A549 (cell line): ENCODE measurements at regions of chr9 and their contacts with region 1.

Region 1: GRCh38 chr9:108272349-108272899 is 583.4 kb downstream of the ACTL7B start:
- DNase-seq: peak; percentile 61 to 71
- ATAC-seq: peak; percentile 79 to 95
- H3K4me3 ChIP-seq: no peak overlapping the region
- H3K27ac ChIP-seq: peak overlapping the region; percentile 48 to 77
- H3K4me1 ChIP-seq: peaks cover 25% of the 10 kb centered on the region
- CTCF ChIP-seq: peak; percentile 71
- EP300 ChIP-seq: no peak
- POLR2A ChIP-seq: no peak
- RAD21 ChIP-seq: peak; percentile 85 to 86

Region 2: GRCh38 chr9:107489687-107490605 is 782.5 kb before region 1 on chr9 and contains the start of gene KLF4:
- CTCF ChIA-PET with region 1: interaction called, 13 read pairs
- POLR2A ChIA-PET with region 1: no interaction called
- DNase-seq: peak; percentile 79 to 95
- ATAC-seq: peak; percentile 81
- H3K4me3 ChIP-seq: peak within 1 kb of the TSS; percentile 53
- H3K27ac ChIP-seq: peak within 1 kb of the TSS; percentile 90 to 91
- H3K4me1 ChIP-seq: peaks cover 25% of the 10 kb centered on the region
- CTCF ChIP-seq: no peak
- EP300 ChIP-seq: peak in 1 of 2 experiments; percentile 67; a peak in 1 of 5 replicates
- POLR2A ChIP-seq: peak; percentile 59
- RAD21 ChIP-seq: peak; percentile 9 to 56; a peak in 3 of 5 replicates
- polyA plus RNA-seq, gene KLF4: 8.3 and 10.1 TPM in 2 replicates

Region 3: DNA sequence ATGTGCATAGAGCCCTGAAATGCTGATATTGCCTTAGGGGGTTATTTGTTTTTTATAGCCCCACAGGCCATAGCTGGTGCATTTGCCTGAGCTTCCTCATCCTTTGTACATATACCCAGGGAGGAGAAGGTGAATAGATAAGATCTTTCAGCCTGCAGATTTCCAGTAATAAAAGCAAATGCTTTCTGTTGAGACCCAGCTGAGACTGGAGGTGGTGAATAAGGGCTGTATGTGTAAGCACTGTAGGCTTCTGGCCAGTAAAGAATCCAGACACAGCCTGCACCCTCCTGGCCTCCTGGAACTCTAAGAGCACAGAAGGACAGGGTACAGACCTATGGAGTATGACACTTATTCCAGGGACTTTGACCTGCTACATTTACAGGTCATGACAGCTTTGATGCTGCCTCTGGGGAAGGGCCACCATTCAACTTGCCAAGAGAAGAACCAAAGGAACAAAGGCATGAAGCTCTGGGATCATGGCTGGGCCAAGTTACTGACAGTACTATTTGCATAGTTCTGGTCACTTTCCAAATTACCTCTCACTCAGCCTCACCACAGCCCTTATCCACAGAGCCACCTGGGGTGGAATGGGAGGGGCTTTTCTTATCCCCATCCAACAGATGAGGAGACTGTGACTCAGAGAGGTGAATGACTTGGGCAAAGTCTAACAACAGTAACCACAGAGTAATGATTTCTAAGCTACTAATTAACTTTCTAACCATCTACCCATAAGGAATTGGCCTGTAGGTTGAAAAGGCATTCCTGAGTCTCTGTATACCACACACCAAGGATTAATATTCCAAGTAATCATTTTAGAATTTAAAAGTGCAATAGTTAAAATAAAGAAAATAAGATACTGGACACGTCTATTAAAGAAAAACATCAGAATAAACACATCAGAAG is 178.4 kb before region 1 on chr9:
- CTCF ChIA-PET with region 1: interaction called, 11 read pairs
- POLR2A ChIA-PET with region 1: no interaction called
- DNase-seq: peak; percentile 50 to 91
- ATAC-seq: peak; percentile 95 to 97
- H3K4me3 ChIP-seq: no peak overlapping the region
- H3K27ac ChIP-seq: peak overlapping the region; percentile 76 to 84
- H3K4me1 ChIP-seq: peaks cover 27% of the 10 kb centered on the region
- CTCF ChIP-seq: no peak; the same call in 2 of the 3 replicates
- EP300 ChIP-seq: peak; percentile 54 to 81; a peak in 3 of 5 replicates
- POLR2A ChIP-seq: no peak
- RAD21 ChIP-seq: peak in 1 of 2 experiments; percentile 20

Region 4: DNA sequence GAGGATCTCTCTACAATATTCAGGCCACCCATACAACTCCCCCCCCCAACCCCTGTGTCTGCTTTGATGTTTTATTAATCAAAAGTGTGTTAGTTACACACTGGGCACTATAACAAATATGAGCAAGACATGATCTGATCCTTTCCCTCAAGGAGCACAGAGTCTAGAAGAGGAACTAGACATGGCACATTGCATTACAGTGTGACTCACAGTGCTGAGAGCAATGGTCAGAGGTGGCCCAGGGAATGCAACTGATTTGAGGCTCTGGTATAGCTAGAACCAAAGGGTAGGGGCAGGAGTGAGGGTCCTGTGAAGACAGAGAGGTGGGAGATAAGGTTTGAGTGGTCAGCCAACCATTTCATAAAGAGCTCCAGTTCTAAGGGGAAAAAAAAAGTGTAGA is 44.2 kb after region 1 on chr9:
- CTCF ChIA-PET with region 1: no interaction called
- POLR2A ChIA-PET with region 1: no interaction called
- DNase-seq: no peak
- ATAC-seq: no peak
- H3K4me3 ChIP-seq: no peak overlapping the region
- H3K27ac ChIP-seq: no peak overlapping the region
- H3K4me1 ChIP-seq: no peaks in the 10 kb centered on the region
- CTCF ChIP-seq: no peak
- EP300 ChIP-seq: no peak
- POLR2A ChIP-seq: no peak
- RAD21 ChIP-seq: no peak

Region 5: GRCh38 chr9:108551030-108551838 is 278.8 kb after region 1 on chr9:
- CTCF ChIA-PET with region 1: interaction called, 10 read pairs
- POLR2A ChIA-PET with region 1: no interaction called
- DNase-seq: peak; percentile 33 to 40
- ATAC-seq: peak; percentile 87 to 88
- H3K4me3 ChIP-seq: no peak overlapping the region
- H3K27ac ChIP-seq: peak overlapping the region in 1 of 2 experiments; percentile 59; a peak in 3 of 6 replicates
- H3K4me1 ChIP-seq: peaks cover 30% of the 10 kb centered on the region
- CTCF ChIP-seq: no peak
- EP300 ChIP-seq: no peak
- POLR2A ChIP-seq: no peak
- RAD21 ChIP-seq: no peak